GM12878 (cell line): ENCODE measurements at regions of chr1 and their contacts with region 1.

Region 1: DNA sequence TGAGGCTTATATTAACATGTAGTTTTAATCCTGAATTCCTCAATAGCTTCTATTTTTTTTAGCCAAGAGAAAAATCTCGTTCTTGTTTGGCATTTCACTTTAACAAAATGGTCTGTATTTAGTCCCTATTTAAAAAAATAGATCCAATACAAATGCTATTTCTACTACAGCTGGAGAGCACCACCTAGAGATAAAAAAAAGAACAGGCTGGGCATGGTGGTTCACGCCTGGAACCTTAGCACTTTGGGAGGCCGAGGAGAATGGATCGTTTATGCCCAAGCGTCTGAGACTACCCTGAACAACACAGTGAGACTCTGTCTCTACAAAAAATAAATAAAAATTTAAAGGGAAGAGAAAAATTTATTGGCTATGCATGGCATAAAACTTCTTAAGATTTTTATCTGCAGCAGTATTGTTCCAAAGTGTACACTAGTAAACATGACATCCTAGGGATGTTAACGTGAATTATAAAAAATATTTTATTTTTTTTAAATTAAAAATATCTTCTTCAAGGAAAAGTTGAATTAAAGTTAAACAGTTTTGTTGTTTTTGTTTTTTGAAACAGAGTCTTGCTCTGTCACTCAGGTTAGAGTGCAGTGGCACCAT is 4.4 kb downstream of the ST7L start:
- DNase-seq: no peak
- ATAC-seq: peak; percentile 10; the same call in 1 of the 3 replicates
- H3K4me3 ChIP-seq: no peak overlapping the region
- H3K27ac ChIP-seq: no peak overlapping the region
- H3K4me1 ChIP-seq: peaks cover 4% of the 10 kb centered on the region
- H3K27me3 ChIP-seq: no peaks in the 10 kb centered on the region
- CTCF ChIP-seq: peak; percentile 49 to 63 (median 56)
- EP300 ChIP-seq: no peak
- POLR2A ChIP-seq: no peak
- RAD21 ChIP-seq: peak; percentile 78

Region 2: DNA sequence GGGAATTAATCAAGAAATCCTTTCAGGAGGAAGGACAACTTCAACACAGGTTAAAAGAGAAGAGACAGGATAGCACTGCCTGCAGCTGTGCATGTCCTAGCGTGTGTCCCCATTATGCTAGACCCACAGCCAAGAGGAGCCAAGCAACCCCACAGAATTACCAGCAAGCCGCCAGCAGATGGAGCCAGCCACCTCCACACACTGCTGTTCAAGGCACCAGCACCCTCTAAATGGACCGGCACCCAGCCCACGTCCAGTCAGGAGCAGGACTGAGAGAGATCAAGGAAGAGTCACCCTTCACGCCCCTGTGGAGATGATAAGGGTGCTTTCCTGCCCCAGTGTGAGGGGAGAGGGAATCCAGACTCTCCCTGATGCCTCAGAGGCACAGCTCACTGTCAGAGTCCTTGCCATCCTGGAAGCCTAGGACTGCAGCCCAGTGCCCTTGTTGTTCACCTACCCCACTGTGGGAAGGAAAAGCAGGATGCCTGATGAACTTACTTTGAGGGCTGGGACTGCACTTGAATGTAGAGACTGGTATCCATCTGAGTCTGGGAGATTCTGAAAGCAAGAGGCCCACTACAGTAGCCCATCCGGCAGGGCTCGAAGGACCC is 255.7 kb before region 1 on chr1:
- CTCF ChIA-PET with region 1: interaction called, 10 read pairs
- POLR2A ChIA-PET with region 1: no interaction called
- RAD21 ChIA-PET with region 1: interaction called, 3 read pairs
- SMC1A ChIA-PET with region 1: interaction called, 3 read pairs
- in situ Hi-C with region 1: no loop called
- intact Hi-C with region 1: no loop called
- DNase-seq: no peak
- ATAC-seq: peak; percentile 96
- H3K4me3 ChIP-seq: no peak overlapping the region
- H3K27ac ChIP-seq: no peak overlapping the region
- H3K4me1 ChIP-seq: peaks cover 6% of the 10 kb centered on the region; the same call in 1 of the 2 replicates
- H3K27me3 ChIP-seq: no peaks in the 10 kb centered on the region; a peak in 1 of 4 replicates
- CTCF ChIP-seq: peak; percentile 78 to 81 (median 78)
- EP300 ChIP-seq: no peak
- POLR2A ChIP-seq: no peak
- RAD21 ChIP-seq: peak; percentile 63

Region 3: DNA sequence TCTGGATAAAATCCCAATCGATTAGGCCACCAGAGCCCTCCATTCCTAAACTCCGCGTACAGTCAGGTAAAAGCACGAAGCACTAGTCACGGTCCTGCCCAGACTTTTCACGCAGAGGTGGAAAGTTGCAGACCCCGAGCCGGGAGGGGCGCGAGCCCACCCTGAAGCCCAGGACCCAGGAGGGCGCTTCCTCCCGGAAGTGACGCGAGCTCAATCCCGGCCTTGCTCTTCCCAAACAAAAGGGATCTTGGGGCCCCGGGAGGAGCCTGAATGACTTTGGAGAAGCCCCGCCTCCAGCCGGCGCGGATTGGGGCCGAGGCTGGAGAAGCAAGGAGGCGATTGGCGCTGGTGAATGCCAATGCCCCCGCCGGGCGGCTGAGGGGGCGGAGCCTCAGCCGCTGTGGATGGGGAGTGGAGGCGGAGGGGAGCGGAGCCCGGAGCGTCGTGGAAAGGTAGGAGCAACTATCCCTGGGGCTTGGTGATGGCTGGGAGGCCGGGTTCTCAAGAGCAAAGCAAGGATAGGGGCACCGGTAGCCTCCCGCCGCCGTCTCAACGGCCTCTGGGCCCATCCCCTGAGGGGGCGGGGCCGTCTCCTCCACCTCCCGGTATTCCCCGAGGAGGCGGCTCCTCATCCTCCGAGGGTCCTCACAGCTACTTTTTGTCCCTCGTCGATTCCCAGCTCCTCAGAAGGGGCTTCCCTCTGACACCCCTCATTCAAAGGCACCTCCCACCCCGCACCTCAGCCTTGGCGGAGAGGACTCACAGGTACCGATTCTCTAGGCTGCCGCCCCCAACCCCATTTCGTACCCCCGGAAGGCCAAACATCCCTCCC is 218.5 kb before region 1 on chr1 and contains the start of gene CTTNBP2NL:
- CTCF ChIA-PET with region 1: interaction called, 330 read pairs
- POLR2A ChIA-PET with region 1: interaction called, 14 read pairs
- RAD21 ChIA-PET with region 1: interaction called, 49 read pairs
- SMC1A ChIA-PET with region 1: interaction called, 125 read pairs
- in situ Hi-C with region 1: loop called (anchors 5 kb)
- intact Hi-C with region 1: loop called (anchors 1 kb)
- DNase-seq: no peak
- ATAC-seq: peak; percentile 85
- H3K4me3 ChIP-seq: peak within 1 kb of the TSS; percentile 97
- H3K27ac ChIP-seq: peak within 1 kb of the TSS; percentile 78
- H3K4me1 ChIP-seq: peaks cover 18% of the 10 kb centered on the region
- H3K27me3 ChIP-seq: no peaks in the 10 kb centered on the region
- CTCF ChIP-seq: no peak
- EP300 ChIP-seq: no peak
- POLR2A ChIP-seq: peak; percentile 28; the same call in 1 of the 2 replicates
- RAD21 ChIP-seq: no peak
- polyA plus RNA-seq, gene CTTNBP2NL: 2.1 to 5.7 TPM

Region 4: DNA sequence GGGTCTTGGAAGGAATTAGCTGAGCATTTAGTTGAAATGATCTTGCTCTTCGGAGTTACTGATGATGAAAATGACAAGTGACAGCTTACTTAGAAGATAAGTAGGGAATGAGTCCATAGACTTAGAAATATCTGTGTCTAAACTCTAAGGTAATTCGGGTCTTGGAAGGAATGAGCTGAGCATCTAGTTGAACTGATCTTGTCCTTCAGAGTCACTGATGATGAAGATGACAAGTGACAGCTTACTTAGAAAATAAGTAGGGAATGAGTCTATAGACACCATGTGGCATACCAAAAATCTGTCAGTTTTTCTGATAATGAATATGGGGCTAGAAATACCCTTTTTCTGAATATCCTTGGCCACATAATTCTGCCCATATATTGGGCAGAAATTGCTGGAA is 203.9 kb before region 1 on chr1:
- CTCF ChIA-PET with region 1: interaction called, 10 read pairs
- POLR2A ChIA-PET with region 1: no interaction called
- RAD21 ChIA-PET with region 1: no interaction called
- SMC1A ChIA-PET with region 1: no interaction called
- in situ Hi-C with region 1: no loop called
- intact Hi-C with region 1: no loop called
- DNase-seq: no peak
- ATAC-seq: no peak
- H3K4me3 ChIP-seq: no peak overlapping the region
- H3K27ac ChIP-seq: no peak overlapping the region
- H3K4me1 ChIP-seq: no peaks in the 10 kb centered on the region
- H3K27me3 ChIP-seq: no peaks in the 10 kb centered on the region
- CTCF ChIP-seq: no peak
- EP300 ChIP-seq: no peak
- POLR2A ChIP-seq: no peak
- RAD21 ChIP-seq: no peak

Region 5: DNA sequence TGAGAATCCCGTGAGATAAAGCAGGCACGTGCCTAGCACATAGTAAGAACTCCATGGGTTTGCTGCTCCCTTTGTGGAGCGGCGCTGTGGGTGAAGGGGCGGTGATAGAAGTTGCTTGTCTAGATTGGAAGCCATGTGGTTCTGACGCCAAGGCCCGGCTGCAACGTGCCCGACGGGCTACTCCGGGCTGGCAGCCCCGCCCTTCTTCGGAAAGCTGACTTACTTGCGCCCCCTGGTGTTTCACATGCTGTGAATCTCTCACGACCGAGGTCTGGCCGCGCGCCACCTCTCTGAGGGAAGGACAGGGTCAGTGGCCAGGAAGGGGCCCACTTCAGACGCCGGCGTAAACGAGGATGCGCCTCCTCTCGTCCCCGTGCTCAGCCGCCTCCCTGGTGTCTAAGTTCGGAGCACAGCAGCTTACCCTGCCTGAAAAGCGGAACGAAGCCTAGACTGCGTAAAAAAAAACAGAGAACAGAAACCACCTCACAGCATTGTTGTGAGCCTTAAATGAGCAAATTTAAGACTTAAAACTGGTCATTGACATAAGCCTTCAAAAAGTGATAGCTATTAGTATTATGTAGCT is 148.4 kb before region 1 on chr1:
- CTCF ChIA-PET with region 1: interaction called, 27 read pairs
- POLR2A ChIA-PET with region 1: interaction called, 3 read pairs
- RAD21 ChIA-PET with region 1: interaction called, 9 read pairs
- SMC1A ChIA-PET with region 1: interaction called, 8 read pairs
- in situ Hi-C with region 1: no loop called
- intact Hi-C with region 1: loop called (anchors 2 kb)
- DNase-seq: peak; percentile 95
- ATAC-seq: peak; percentile 99
- H3K4me3 ChIP-seq: no peak overlapping the region
- H3K27ac ChIP-seq: peak overlapping the region; percentile 14
- H3K4me1 ChIP-seq: peaks cover 15% of the 10 kb centered on the region
- H3K27me3 ChIP-seq: no peaks in the 10 kb centered on the region
- CTCF ChIP-seq: peak; percentile 77 to 91 (median 81); a peak in 5 of 6 replicates
- EP300 ChIP-seq: peak; percentile 85 to 94; a peak in 3 of 4 replicates
- POLR2A ChIP-seq: peak; percentile 61
- RAD21 ChIP-seq: peak; percentile 72

Region 6: GRCh38 chr1:112501810-112502641 is 112.5 kb before region 1 on chr1:
- CTCF ChIA-PET with region 1: interaction called, 27 read pairs
- POLR2A ChIA-PET with region 1: no interaction called
- RAD21 ChIA-PET with region 1: interaction called, 6 read pairs
- SMC1A ChIA-PET with region 1: interaction called, 7 read pairs
- in situ Hi-C with region 1: no loop called
- intact Hi-C with region 1: loop called (anchors 2 kb)
- DNase-seq: no peak
- ATAC-seq: peak; percentile 78
- H3K4me3 ChIP-seq: peak overlapping the region; percentile 50; the same call in 1 of the 2 replicates
- H3K27ac ChIP-seq: no peak overlapping the region
- H3K4me1 ChIP-seq: no peaks in the 10 kb centered on the region
- H3K27me3 ChIP-seq: peaks cover 3 to 5% of the 10 kb centered on the region in 2 experiments; a peak in 2 of 4 replicates
- CTCF ChIP-seq: peak; percentile 73 to 89 (median 77)
- EP300 ChIP-seq: no peak
- POLR2A ChIP-seq: no peak
- RAD21 ChIP-seq: peak; percentile 63

Region 7: GRCh38 chr1:112762541-112763517 is 148.3 kb after region 1 on chr1:
- CTCF ChIA-PET with region 1: no interaction called
- POLR2A ChIA-PET with region 1: no interaction called
- RAD21 ChIA-PET with region 1: no interaction called
- SMC1A ChIA-PET with region 1: no interaction called
- in situ Hi-C with region 1: no loop called
- intact Hi-C with region 1: no loop called
- DNase-seq: no peak
- ATAC-seq: peak; percentile 23; the same call in 1 of the 3 replicates
- H3K4me3 ChIP-seq: no peak overlapping the region
- H3K27ac ChIP-seq: no peak overlapping the region
- H3K4me1 ChIP-seq: no peaks in the 10 kb centered on the region
- H3K27me3 ChIP-seq: peaks cover 0 to 2% of the 10 kb centered on the region in 2 experiments; a peak in 1 of 4 replicates
- CTCF ChIP-seq: no peak
- EP300 ChIP-seq: no peak
- POLR2A ChIP-seq: no peak
- RAD21 ChIP-seq: no peak